ENCODE measurements at regions of chr5 and their contacts with region 1.

Region 1: GRCh38 chr5:147887024-147887627 is 8.6 kb downstream of the SCGB3A2 start:
- DNase-seq: no peak
- H3K4me3 ChIP-seq: no peak overlapping the region
- CTCF ChIP-seq: no peak
- POLR2A ChIP-seq: no peak

Region 2: GRCh38 chr5:147935032-147935431 is 47.9 kb after region 1 on chr5:
- intact Hi-C with region 1: loop called (anchors 10 kb)
- DNase-seq: no peak
- H3K4me3 ChIP-seq: no peak overlapping the region
- CTCF ChIP-seq: no peak
- POLR2A ChIP-seq: no peak

Region 3: GRCh38 chr5:148033146-148033545 is 146.0 kb after region 1 on chr5:
- intact Hi-C with region 1: no loop called
- DNase-seq: no peak
- H3K4me3 ChIP-seq: no peak overlapping the region
- CTCF ChIP-seq: no peak
- POLR2A ChIP-seq: no peak

Measured in lower leg skin (tissue), 4 donors.